H1 (cell line): ENCODE measurements at regions of chr19 and their contacts with region 1.

Region 1: DNA sequence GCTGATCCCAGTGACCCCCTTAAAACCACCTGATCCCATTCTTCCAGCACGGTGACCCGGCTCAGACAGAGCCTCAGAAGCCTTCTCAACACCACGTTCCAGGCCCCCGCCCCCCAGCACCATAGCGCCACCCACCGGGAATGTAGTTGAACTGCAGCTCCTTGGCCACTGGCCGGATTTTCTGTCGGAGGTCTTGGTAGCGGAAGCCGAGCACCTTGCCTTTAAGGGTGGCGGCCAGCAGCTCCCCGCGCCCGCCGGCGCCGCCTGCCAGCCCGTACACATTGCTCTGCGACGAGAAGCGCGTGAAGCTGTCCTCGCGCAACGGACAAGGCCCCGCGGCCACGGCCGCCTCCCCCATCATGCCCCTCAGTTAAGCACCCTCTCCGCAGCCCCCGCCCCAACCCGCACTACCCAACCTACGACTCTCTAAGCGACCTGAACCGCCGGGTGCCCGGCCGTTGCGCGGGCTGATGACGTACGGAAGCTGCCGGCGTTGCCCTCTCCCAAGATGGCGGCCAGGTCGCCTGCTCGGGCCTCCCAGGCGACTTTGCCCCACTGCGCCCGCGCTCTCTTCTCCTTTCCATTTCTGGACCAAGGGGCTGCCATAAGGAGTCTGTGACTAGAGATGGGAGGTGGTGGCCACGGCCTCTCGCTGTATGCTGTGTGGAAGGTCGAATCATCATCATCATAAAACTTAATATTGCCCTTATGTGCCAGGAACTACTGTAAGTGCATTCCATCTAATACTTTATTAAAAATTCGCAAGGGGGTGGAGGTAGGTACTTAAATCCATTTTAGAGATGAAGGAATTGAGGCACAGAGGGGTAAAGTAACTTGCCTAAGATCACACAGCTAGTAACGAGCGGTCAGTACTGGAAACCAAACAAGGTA is at the start of gene KPTN:
- DNase-seq: peak; percentile 75 to 99
- H3K4me3 ChIP-seq: peak within 1 kb of the TSS; percentile 76 to 90 (median 83)
- H3K27ac ChIP-seq: peak within 1 kb of the TSS; percentile 94
- H3K4me1 ChIP-seq: peaks cover 0 to 8% (median 3%) of the 10 kb centered on the region in 4 experiments; a peak in 2 of 7 replicates
- H3K27me3 ChIP-seq: no peaks in the 10 kb centered on the region
- CTCF ChIP-seq: peak; percentile 93 to 99 (median 95)
- EP300 ChIP-seq: no peak
- POLR2A ChIP-seq: peak in 1 of 2 experiments; percentile 68; a peak in 2 of 3 replicates
- RAD21 ChIP-seq: peak; percentile 70 to 76
- total RNA-seq, gene KPTN: 23.6 and 28.0 TPM in 2 replicates

Region 2: DNA sequence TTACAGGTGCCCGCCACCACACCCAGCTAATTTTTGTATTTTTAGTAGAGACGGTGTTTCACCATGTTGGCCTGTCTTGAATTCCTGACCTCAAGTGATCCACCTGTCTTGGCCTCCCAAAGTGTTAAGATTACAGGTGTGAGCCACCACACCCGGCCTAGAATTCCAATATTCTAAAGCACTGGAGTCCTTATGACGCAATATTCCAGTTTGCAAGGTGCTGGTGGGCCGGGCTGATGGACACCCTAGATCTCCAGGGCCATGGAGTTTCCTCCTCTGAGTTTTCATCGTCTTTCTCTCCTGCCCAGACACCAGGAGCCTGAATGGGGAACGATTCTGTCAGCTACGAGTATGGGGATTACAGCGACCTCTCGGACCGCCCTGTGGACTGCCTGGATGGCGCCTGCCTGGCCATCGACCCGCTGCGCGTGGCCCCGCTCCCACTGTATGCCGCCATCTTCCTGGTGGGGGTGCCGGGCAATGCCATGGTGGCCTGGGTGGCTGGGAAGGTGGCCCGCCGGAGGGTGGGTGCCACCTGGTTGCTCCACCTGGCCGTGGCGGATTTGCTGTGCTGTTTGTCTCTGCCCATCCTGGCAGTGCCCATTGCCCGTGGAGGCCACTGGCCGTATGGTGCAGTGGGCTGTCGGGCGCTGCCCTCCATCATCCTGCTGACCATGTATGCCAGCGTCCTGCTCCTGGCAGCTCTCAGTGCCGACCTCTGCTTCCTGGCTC is 143.4 kb before region 1 on chr19:
- CTCF ChIA-PET with region 1: no interaction called
- POLR2A ChIA-PET with region 1: no interaction called
- DNase-seq: no peak
- H3K4me3 ChIP-seq: no peak overlapping the region
- H3K27ac ChIP-seq: no peak overlapping the region
- H3K4me1 ChIP-seq: peaks cover 0 to 3% (median 0%) of the 10 kb centered on the region in 4 experiments; a peak in 1 of 7 replicates
- H3K27me3 ChIP-seq: no peaks in the 10 kb centered on the region
- CTCF ChIP-seq: no peak
- EP300 ChIP-seq: no peak
- POLR2A ChIP-seq: no peak
- RAD21 ChIP-seq: no peak

Region 3: DNA sequence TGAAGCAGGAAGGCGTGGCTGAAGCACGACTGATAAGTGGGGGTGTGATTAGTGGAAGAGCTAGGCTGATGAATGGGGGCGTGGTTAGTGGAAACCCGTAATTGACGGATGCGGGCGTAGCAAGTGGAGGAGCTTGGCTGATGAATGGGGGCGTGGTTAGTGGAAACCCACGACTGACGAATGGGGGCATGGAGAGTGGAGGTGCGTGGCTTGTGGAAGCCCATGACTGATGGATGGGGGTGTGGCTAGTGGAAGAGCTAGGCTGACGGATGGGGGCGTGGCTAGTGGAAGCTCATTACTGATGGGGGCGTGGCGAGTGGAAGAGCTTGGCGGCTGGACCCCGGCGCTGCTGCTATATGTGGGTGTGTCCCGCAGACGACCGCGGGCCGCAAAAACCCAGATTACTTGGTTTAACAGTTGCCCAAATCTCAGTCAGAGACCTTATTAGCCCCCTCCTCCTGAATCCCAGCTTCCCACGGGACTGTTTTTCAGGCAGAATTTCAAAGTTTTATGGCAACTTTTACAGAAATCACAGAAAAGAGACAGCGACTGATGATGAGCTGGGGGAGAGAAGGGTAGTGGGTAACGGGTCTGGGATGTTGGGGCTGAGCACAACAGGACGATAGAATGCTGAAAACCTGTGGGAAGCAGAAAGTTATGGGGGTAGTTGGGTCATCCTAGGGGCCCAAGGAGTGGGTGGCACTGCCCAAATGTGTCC is 55.7 kb before region 1 on chr19:
- CTCF ChIA-PET with region 1: interaction called, 80 read pairs
- POLR2A ChIA-PET with region 1: interaction called, 6 read pairs
- DNase-seq: peak; percentile 96 to 100
- H3K4me3 ChIP-seq: peak overlapping the region; percentile 31 to 61 (median 42); a peak in 7 of 8 replicates
- H3K27ac ChIP-seq: no peak overlapping the region
- H3K4me1 ChIP-seq: peaks cover 0 to 23% (median 12%) of the 10 kb centered on the region in 4 experiments; a peak in 5 of 7 replicates
- H3K27me3 ChIP-seq: peaks cover 5 to 33% (median 29%) of the 10 kb centered on the region in 4 experiments
- CTCF ChIP-seq: no peak
- EP300 ChIP-seq: no peak
- POLR2A ChIP-seq: no peak
- RAD21 ChIP-seq: no peak

Region 4: DNA sequence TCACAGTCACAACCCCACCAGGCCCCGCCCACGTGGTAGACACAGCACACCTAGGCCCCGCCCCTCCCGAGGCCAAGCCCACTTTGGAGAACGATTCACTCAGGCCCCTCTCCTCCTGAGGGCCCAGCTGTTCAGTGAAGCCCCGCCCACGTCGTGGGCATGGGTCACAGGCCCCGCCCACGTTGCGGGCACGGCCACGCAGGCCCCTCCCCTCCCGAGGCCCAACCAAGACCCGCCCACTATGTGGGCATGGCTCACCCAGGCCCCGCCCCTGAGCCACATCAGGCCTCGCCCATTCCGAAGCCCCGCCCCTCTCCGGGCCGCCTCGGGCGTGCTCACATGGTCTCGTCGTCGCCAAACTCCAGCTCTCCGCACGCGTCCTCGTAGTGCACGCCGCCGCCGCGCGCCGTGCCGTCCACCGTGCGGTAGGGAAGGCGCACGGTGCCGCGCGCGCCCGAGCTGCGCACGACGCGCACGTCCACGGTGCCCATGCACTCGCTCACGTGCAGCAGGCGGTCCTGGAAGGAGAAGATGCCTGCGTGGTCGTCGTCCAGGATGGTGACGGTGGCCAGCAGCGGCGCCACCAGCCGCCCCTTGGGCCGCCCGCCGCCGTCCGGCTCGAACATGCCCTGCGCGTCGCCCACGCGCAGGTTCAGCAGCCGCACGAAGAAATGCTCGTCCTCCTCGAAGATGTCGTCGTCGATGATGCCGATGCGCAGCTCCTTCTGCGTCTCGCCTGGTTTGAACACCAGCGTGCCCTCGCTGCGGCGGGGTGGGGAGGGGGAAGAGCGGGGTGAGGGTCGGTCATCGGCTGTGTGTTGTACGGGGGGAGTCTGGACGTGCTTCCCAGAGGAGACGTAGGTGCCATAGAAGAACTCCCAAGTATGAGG is 36.3 kb before region 1 on chr19:
- CTCF ChIA-PET with region 1: interaction called, 11 read pairs
- POLR2A ChIA-PET with region 1: interaction called, 7 read pairs
- DNase-seq: peak; percentile 95 to 100
- H3K4me3 ChIP-seq: peak overlapping the region; percentile 56 to 79 (median 70)
- H3K27ac ChIP-seq: peak overlapping the region; percentile 56; the same call in 1 of the 2 replicates
- H3K4me1 ChIP-seq: peaks cover 7 to 18% (median 11%) of the 10 kb centered on the region in 4 experiments
- H3K27me3 ChIP-seq: peaks cover 0 to 9% (median 9%) of the 10 kb centered on the region in 4 experiments; a peak in 5 of 7 replicates
- CTCF ChIP-seq: peak in 1 of 3 experiments; percentile 0; a peak in 1 of 4 replicates
- EP300 ChIP-seq: no peak
- POLR2A ChIP-seq: no peak
- RAD21 ChIP-seq: no peak

Region 5: GRCh38 chr19:47494729-47495128 is 10.7 kb after region 1 on chr19:
- CTCF ChIA-PET with region 1: interaction called, 32 read pairs
- POLR2A ChIA-PET with region 1: interaction called, 55 read pairs
- DNase-seq: no peak
- H3K4me3 ChIP-seq: no peak overlapping the region
- H3K27ac ChIP-seq: no peak overlapping the region
- H3K4me1 ChIP-seq: peaks cover 0 to 6% (median 2%) of the 10 kb centered on the region in 4 experiments; a peak in 2 of 7 replicates
- H3K27me3 ChIP-seq: no peaks in the 10 kb centered on the region
- CTCF ChIP-seq: no peak
- EP300 ChIP-seq: no peak
- POLR2A ChIP-seq: no peak
- RAD21 ChIP-seq: no peak

Region 6: DNA sequence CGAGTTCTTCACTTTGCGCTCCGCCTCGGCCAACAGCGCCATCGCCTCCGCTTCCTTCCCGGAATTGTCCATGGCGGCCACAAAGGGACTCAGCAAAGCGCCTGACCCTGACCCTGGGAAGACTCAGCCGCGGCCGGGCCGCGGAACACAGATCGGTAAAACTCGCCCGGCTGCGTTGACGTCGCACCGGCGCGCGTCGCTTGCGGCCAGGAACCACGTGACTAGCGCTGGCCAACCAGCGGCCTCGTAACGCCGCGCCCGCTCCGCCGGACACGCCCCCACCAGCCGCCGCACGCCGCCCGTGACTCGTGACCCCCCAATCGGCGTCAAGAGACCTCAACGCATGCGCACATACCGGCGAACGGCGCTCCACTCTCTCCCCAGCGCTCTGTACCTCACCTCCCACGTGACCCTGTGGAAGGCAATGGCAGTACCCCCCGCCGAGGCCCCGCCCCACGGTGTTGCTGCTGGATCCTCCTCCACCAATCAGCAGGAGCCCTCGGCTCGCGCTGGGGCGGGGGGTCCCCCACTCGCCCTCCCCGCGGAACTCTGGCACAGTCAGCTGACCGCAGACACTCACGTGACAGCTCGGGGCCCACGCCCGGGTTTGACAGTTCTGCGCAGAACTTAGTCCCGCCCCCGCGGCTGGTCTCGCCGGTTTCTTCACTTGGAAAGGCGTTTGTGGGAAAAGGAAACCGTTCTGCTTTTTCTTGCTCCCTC is 31.0 kb after region 1 on chr19 and contains the start of gene NAPA:
- CTCF ChIA-PET with region 1: interaction called, 10 read pairs
- POLR2A ChIA-PET with region 1: interaction called, 6 read pairs
- DNase-seq: peak; percentile 100
- H3K4me3 ChIP-seq: peak within 1 kb of the TSS; percentile 88 to 96 (median 94)
- H3K27ac ChIP-seq: peak within 1 kb of the TSS; percentile 60; the same call in 1 of the 2 replicates
- H3K4me1 ChIP-seq: peaks cover 0 to 3% (median 3%) of the 10 kb centered on the region in 4 experiments; a peak in 5 of 7 replicates
- H3K27me3 ChIP-seq: no peaks in the 10 kb centered on the region
- CTCF ChIP-seq: peak in 1 of 3 experiments; percentile 70; a peak in 1 of 4 replicates
- EP300 ChIP-seq: peak in 1 of 2 experiments; percentile 74; a peak in 1 of 3 replicates
- POLR2A ChIP-seq: peak in 1 of 2 experiments; percentile 85; a peak in 2 of 3 replicates
- RAD21 ChIP-seq: peak; percentile 52 to 65
- total RNA-seq, gene NAPA: 58.3 and 58.5 TPM in 2 replicates

Region 7: DNA sequence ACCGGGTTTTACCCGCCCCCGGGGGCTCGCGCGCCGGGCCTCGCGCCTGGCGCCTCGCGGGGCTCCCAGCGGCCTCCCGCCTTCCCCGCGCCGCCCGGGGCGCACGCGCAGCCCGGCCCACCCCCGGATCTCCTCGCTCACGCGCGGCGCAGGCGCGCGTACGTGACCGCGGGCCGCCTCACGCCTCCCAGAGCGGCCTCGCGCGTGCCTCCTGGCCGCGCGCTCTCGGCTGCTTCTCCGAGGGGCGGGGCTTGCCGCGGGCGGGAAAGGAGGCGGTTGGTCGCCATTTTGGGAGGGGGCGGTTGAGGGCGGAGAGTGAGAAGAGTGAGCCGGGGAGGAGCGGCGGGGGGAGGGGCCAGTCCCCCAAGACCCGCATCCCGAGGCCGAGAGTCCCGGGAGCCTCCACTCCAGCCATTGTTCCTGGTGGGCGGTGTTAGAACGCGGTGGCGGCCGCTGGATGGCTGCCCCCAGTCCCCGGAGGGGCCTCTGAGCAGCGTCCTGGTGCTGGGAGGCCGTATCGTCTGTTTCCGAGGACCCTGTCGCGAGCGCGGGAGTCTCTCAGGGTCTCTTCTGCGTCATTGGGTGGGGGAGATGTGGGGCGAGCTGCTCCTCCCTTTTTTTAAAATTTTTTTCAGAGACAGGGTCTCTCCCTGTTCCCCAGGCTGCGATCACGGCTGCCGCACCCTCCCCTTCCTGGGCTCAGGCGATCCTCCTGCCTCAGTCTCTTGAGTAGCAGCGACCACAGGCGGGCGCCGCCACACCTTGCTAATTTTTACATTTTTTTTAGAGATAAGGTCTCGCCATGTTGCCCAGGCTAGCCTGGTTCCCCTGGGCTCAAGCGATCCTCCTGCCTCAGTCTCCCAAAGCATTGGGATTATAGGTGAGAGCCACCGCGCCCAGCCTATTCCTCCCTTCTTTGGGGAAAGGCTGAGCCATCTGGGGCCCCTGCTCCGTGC is 89.3 kb after region 1 on chr19 and contains the start of gene ZNF541:
- CTCF ChIA-PET with region 1: no interaction called
- POLR2A ChIA-PET with region 1: no interaction called
- DNase-seq: no peak
- H3K4me3 ChIP-seq: no peak within 1 kb of the TSS
- H3K27ac ChIP-seq: no peak within 1 kb of the TSS
- H3K4me1 ChIP-seq: peaks cover 0 to 3% (median 1%) of the 10 kb centered on the region in 4 experiments; a peak in 2 of 7 replicates
- H3K27me3 ChIP-seq: no peaks in the 10 kb centered on the region
- CTCF ChIP-seq: no peak
- EP300 ChIP-seq: no peak
- POLR2A ChIP-seq: no peak
- RAD21 ChIP-seq: no peak
- total RNA-seq, gene ZNF541: 0.50 TPM in 1 of 2 replicates, not detected in the other

Region 8: GRCh38 chr19:47707135-47707925 is 223.3 kb after region 1 on chr19:
- CTCF ChIA-PET with region 1: interaction called, 13 read pairs
- POLR2A ChIA-PET with region 1: interaction called, 5 read pairs
- DNase-seq: peak in 1 of 2 experiments; percentile 94
- H3K4me3 ChIP-seq: no peak overlapping the region
- H3K27ac ChIP-seq: no peak overlapping the region
- H3K4me1 ChIP-seq: no peaks in the 10 kb centered on the region
- H3K27me3 ChIP-seq: no peaks in the 10 kb centered on the region
- CTCF ChIP-seq: peak; percentile 91 to 93 (median 92)
- EP300 ChIP-seq: peak in 1 of 2 experiments; percentile 40; a peak in 1 of 3 replicates
- POLR2A ChIP-seq: no peak
- RAD21 ChIP-seq: peak; percentile 90 to 91